Sigmoid colon (tissue), 7 donors: ENCODE measurements at regions of chr4 and their contacts with region 1.

Region 1: DNA sequence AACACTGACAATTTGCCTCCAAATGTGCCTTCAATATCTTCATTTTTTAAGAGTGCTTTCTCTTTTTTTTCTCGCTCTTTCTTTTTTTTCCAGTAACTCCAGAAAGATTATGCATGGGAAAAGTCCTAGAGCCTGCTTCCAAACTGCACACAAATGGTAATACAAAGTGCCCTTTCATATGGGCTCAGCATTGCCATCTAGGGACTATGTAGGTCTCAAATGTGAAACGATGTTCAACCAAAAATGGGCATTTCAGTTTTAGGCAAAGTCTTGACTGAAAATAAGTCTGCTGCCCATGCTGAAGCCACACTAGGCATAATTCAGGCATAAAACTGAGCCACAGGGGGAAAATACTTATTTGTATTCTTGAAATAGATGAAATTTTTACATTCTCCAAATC is 65.6 kb downstream of the SYNPO2 start:
- DNase-seq: no peak
- H3K4me3 ChIP-seq: no peak overlapping the region
- H3K27ac ChIP-seq: peak overlapping the region; percentile 71 to 90 (median 85)
- H3K4me1 ChIP-seq: peaks cover 0 to 95% (median 69%) of the 10 kb centered on the region in 4 donors
- H3K27me3 ChIP-seq: no peaks in the 10 kb centered on the region
- CTCF ChIP-seq: no peak
- EP300 ChIP-seq: no peak
- POLR2A ChIP-seq: no peak

Region 2: GRCh38 chr4:118905566-118905965 is 48.7 kb before region 1 on chr4:
- intact Hi-C with region 1: loop called (anchors 5 kb)
- DNase-seq: no peak
- H3K4me3 ChIP-seq: no peak overlapping the region
- H3K27ac ChIP-seq: peak overlapping the region; percentile 63 to 90 (median 86)
- H3K4me1 ChIP-seq: peaks cover 0 to 86% (median 68%) of the 10 kb centered on the region in 4 donors
- H3K27me3 ChIP-seq: no peaks in the 10 kb centered on the region
- CTCF ChIP-seq: no peak
- EP300 ChIP-seq: no peak
- POLR2A ChIP-seq: no peak

Region 3: DNA sequence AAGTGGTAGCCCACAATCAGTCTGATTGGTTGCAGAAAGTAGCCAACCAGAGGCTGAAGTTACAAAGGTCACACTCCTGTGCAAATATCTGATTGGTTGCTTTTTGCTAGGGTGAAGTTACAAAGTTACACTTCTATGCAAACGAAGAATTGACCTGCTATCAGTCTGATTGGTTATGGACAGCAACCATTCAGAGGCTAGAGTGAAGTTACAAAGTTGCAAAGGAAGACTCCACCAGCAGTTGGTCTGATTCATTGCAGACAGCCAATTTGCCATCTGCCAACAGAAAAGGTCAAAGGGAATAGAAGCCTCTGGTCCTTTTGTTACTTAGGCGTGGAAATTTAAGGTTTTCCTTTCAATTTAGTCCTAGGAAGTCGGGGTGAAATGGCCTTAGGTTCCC is 1590.6 kb after region 1 on chr4:
- intact Hi-C with region 1: no loop called
- DNase-seq: no peak
- H3K4me3 ChIP-seq: no peak overlapping the region
- H3K27ac ChIP-seq: no peak overlapping the region
- H3K4me1 ChIP-seq: no peaks in the 10 kb centered on the region
- H3K27me3 ChIP-seq: no peaks in the 10 kb centered on the region
- CTCF ChIP-seq: no peak
- EP300 ChIP-seq: no peak
- POLR2A ChIP-seq: no peak